Activated naive CD4-positive, alpha-beta T cell treated with anti-CD3 and anti-CD28 coated beads for 36 hours (primary cell): ENCODE measurements at regions of chr14 and their contacts with region 1.

Region 1: GRCh38 chr14:20632682-20633428 is 8.6 kb downstream of the OR6S1 start:
- DNase-seq: peak; percentile 83
- H3K4me3 Mint-ChIP-seq: peak overlapping the region; percentile 79
- H3K27ac Mint-ChIP-seq: peak overlapping the region; percentile 89
- H3K4me1 Mint-ChIP-seq: peaks cover 35% of the 10 kb centered on the region
- H3K27me3 Mint-ChIP-seq: peaks cover 34% of the 10 kb centered on the region

Region 2: DNA sequence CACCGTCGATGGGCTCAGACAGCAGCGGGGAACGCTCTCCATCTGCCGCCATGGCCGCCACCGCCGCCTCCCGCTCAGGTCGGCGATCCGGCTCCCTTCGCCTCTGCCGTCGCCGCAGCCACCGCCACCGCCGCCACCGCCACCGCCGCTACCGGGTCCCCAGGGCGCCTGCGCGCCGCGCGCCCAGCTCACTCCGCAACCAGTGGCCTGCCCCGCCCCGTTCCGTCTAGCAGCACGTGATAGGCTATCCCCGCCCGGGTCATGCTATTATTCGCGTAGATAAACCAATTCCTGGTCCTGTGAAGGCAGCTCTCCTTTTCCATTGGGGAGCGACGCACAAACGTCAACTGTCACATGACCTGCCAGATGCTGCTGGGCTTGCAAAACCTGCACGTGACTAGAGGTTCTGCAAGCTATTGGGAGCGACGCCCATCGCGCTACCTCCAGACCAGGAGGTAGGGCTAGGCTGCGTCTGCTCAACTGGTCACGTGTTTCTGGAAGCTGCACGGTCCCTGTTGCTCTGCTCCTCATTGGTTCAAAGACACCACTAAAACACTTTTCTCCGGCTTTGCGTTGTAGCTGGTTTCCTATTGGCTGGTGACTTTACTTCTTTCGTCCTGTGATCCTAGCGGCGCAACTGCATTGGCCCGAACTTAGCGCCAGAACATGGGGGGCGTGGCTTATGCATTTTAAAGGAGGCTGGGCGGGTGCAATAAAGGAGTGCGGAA is 171.4 kb before region 1 on chr14 and contains the start of gene PIP4P1:
- CTCF ChIA-PET with region 1: interaction called, 6 read pairs
- intact Hi-C with region 1: loop called (anchors 1 kb)
- DNase-seq: peak; percentile 99
- H3K4me3 Mint-ChIP-seq: peak within 1 kb of the TSS; percentile 92
- H3K27ac Mint-ChIP-seq: peak within 1 kb of the TSS; percentile 96
- H3K4me1 Mint-ChIP-seq: peaks cover 29% of the 10 kb centered on the region
- H3K27me3 Mint-ChIP-seq: no peaks in the 10 kb centered on the region
- total RNA-seq, gene PIP4P1: 31.6 to 32.3 TPM

Region 3: GRCh38 chr14:20652996-20653975 is 20.4 kb after region 1 on chr14:
- CTCF ChIA-PET with region 1: interaction called, 3 read pairs
- intact Hi-C with region 1: loop called (anchors 1 kb)
- DNase-seq: peak; percentile 87
- H3K4me3 Mint-ChIP-seq: peak overlapping the region; percentile 69
- H3K27ac Mint-ChIP-seq: peak overlapping the region; percentile 66
- H3K4me1 Mint-ChIP-seq: peaks cover 25% of the 10 kb centered on the region
- H3K27me3 Mint-ChIP-seq: peaks cover 54% of the 10 kb centered on the region

Region 4: GRCh38 chr14:20782280-20782890 is 149.5 kb after region 1 on chr14:
- CTCF ChIA-PET with region 1: no interaction called
- intact Hi-C with region 1: loop called (anchors 5 kb)
- DNase-seq: peak; percentile 52
- H3K4me3 Mint-ChIP-seq: peak overlapping the region; percentile 63
- H3K27ac Mint-ChIP-seq: peak overlapping the region; percentile 46
- H3K4me1 Mint-ChIP-seq: peaks cover 22% of the 10 kb centered on the region
- H3K27me3 Mint-ChIP-seq: no peaks in the 10 kb centered on the region